Activated T-helper 2 cell treated with anti-CD3 and anti-CD28 coated beads, Interferon-gamma antibody, Interleukin-2, Interleukin-4, amounts not matched to agents 10 μg/mL and 5 μg/mL and 100 μg/mL, durations not matched to agents 14 hours and 24 hours and 36 hours (primary cell): ENCODE measurements at regions of chr2 and their contacts with region 1.

Region 1: DNA sequence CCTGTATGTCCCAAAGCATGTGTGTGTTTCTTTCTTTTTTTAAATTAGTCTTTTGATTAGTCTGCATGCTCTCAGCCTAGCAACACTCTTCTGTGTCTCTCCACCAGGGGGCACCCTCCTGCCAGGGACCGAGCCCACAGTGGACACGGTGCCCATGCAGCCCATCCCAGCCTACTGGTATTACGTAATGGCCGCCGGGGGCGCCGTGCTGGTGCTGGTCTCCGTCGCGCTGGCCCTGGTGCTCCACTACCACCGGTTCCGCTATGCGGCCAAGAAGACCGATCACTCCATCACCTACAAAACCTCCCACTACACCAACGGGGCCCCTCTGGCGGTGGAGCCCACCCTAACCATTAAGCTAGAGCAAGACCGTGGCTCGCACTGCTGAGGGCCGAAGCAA is 93.8 kb downstream of the NRP2 start:
- DNase-seq: peak; percentile 24
- H3K4me3 Mint-ChIP-seq: no peak overlapping the region
- H3K27ac Mint-ChIP-seq: no peak overlapping the region
- H3K4me1 Mint-ChIP-seq: no peaks in the 10 kb centered on the region
- H3K27me3 Mint-ChIP-seq: peaks cover 21% of the 10 kb centered on the region

Region 2: GRCh38 chr2:205814039-205814364 is 37.9 kb after region 1 on chr2:
- intact Hi-C with region 1: loop called (anchors 5 kb)
- DNase-seq: no peak
- H3K4me3 Mint-ChIP-seq: no peak overlapping the region
- H3K27ac Mint-ChIP-seq: no peak overlapping the region
- H3K4me1 Mint-ChIP-seq: no peaks in the 10 kb centered on the region
- H3K27me3 Mint-ChIP-seq: peaks cover 15% of the 10 kb centered on the region

Region 3: DNA sequence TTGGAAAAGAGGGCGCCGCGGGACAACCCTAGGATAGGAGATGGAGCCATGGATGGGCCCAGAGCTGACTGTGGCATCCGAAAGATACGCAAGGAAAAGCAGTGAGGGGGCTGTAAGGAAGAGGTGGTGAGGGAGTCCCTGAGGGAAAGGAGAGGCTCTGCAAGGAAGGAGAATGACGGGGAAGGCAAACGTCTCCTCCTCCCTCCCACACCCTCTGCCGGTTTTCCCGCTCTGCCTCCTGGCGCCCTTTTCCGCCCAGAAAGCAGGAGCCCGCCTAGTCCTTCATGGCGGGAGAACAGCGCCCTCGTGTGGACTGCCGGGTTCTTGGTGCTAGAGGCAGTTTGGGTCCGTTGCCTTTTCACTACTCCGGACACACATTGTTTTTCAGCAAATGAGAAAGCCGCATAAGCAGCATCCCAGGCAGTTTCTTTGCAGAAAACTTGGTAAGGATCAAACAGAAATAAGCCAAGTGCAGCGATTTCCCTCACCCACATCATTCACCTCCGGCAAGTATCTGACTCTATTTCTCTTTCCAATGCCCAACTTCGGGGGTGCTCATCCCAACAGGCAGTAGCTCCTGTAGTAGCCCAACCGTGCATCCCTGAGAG is 109.5 kb after region 1 on chr2:
- intact Hi-C with region 1: loop called (anchors 5 kb)
- DNase-seq: peak; percentile 47
- H3K4me3 Mint-ChIP-seq: no peak overlapping the region
- H3K27ac Mint-ChIP-seq: no peak overlapping the region
- H3K4me1 Mint-ChIP-seq: peaks cover 1% of the 10 kb centered on the region
- H3K27me3 Mint-ChIP-seq: peaks cover 8% of the 10 kb centered on the region